ENCODE measurements at regions of chr1 and their contacts with region 1.

Region 1: GRCh38 chr1:176897350-176898236 is 266.9 kb downstream of the ASTN1 start:
- DNase-seq: no peak
- ATAC-seq: peak; percentile 92
- H3K4me3 ChIP-seq: no peak overlapping the region
- H3K27ac ChIP-seq: no peak overlapping the region
- H3K4me1 ChIP-seq: no peaks in the 10 kb centered on the region
- H3K27me3 ChIP-seq: no peaks in the 10 kb centered on the region; a peak in 1 of 4 replicates
- CTCF ChIP-seq: peak; percentile 64 to 85 (median 68)
- EP300 ChIP-seq: no peak
- POLR2A ChIP-seq: no peak
- RAD21 ChIP-seq: peak; percentile 70

Region 2: DNA sequence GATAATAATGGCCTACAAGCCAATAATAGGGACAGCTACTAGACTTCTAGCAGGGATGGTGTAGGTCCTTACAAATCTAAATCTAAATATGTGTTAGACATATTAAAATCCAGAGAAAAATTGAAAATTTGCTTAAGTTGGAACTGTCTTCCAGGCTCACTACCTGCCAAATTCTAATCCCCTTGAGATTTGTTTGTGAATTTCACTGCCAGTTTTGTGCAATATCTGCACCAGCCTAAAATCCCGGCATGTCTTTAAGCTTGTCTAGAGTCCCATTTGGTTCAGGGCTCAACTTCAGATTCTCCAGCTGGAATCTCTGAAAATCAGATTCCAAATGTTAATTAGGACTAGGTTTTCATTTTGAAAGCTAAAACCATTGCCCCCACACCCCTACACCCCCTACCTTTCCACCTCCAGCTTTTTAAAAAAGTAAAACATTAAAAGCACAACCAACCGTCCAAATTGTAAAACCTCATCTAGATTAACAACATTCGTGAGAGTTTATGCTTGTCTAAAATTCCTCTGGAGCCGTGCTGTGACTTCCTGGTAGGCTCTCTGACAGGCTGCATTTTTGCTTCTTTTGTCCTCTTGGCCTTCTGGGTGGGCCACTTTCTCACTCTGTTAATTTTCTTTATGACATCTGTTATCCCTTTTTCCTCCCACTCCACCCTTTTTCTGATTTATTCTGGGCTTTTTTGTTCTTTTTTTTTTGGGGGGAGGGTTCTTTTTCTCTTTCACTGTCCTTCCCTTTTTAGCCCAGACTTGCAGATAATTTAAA is 85.9 kb before region 1 on chr1:
- CTCF ChIA-PET with region 1: no interaction called
- POLR2A ChIA-PET with region 1: no interaction called
- RAD21 ChIA-PET with region 1: no interaction called
- SMC1A ChIA-PET with region 1: no interaction called
- in situ Hi-C with region 1: no loop called
- intact Hi-C with region 1: no loop called
- DNase-seq: no peak
- ATAC-seq: no peak
- H3K4me3 ChIP-seq: no peak overlapping the region
- H3K27ac ChIP-seq: no peak overlapping the region
- H3K4me1 ChIP-seq: no peaks in the 10 kb centered on the region
- H3K27me3 ChIP-seq: no peaks in the 10 kb centered on the region
- CTCF ChIP-seq: no peak
- EP300 ChIP-seq: no peak
- POLR2A ChIP-seq: no peak
- RAD21 ChIP-seq: no peak

Region 3: DNA sequence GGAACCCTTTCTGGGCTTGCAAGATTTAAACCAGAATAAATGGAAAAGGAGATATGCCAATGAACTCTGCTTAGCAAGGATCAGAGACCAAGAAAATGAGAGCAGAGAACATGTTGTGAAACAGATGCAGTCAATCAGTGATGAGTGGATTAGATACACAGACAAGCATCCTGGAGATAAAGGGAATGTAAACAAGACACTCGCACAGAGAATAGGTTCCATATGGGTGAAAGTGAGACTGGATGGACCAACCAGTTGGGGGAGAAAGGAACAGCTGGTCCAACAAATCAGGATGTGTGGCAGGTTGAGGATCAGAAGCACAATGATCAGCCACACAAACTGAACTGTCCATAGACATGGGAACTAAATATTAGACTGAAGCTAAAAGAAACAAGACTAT is 71.3 kb before region 1 on chr1:
- CTCF ChIA-PET with region 1: no interaction called
- POLR2A ChIA-PET with region 1: no interaction called
- RAD21 ChIA-PET with region 1: no interaction called
- SMC1A ChIA-PET with region 1: no interaction called
- in situ Hi-C with region 1: no loop called
- intact Hi-C with region 1: no loop called
- DNase-seq: no peak
- ATAC-seq: no peak
- H3K4me3 ChIP-seq: no peak overlapping the region
- H3K27ac ChIP-seq: no peak overlapping the region
- H3K4me1 ChIP-seq: no peaks in the 10 kb centered on the region
- H3K27me3 ChIP-seq: no peaks in the 10 kb centered on the region
- CTCF ChIP-seq: no peak
- EP300 ChIP-seq: no peak
- POLR2A ChIP-seq: no peak
- RAD21 ChIP-seq: no peak

Region 4: DNA sequence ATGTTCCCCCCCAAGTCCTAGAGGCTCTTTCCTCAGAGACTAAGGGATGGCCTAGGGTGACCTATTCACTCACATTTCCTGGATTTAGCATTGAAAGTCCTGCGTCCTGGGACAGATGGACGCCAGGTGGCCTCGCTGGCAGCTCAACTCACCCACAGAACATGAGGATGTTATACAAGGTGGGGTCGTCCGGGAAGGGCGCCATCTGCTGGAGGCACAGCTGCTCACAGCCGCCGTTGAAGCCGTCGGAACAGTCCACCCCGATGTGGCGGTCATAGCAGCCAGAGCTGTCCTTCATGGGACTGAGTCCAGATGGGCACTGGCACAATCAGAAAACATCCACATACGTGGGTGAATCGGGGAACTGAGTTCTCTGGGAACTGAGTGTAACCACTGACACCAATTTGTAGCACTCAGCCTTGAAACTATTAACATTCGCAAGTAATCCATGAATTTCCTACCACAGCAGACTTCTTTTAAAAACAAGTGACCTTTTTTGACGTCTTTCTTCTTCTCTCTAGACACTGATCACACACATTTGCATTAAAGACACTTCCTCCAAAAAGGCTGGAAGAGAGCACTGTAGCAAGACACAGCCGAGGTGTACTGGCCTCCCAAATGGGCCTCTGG is 51.6 kb after region 1 on chr1:
- CTCF ChIA-PET with region 1: interaction called, 45 read pairs
- POLR2A ChIA-PET with region 1: no interaction called
- RAD21 ChIA-PET with region 1: interaction called, 13 read pairs
- SMC1A ChIA-PET with region 1: interaction called, 16 read pairs
- in situ Hi-C with region 1: no loop called
- intact Hi-C with region 1: loop called (anchors 1 kb)
- DNase-seq: no peak
- ATAC-seq: peak; percentile 99
- H3K4me3 ChIP-seq: no peak overlapping the region
- H3K27ac ChIP-seq: no peak overlapping the region
- H3K4me1 ChIP-seq: no peaks in the 10 kb centered on the region
- H3K27me3 ChIP-seq: no peaks in the 10 kb centered on the region
- CTCF ChIP-seq: peak; percentile 60 to 74 (median 73)
- EP300 ChIP-seq: no peak
- POLR2A ChIP-seq: no peak
- RAD21 ChIP-seq: 0 out of 2 replicates have a peak, but pooled peaks have one; percentile 31

Region 5: DNA sequence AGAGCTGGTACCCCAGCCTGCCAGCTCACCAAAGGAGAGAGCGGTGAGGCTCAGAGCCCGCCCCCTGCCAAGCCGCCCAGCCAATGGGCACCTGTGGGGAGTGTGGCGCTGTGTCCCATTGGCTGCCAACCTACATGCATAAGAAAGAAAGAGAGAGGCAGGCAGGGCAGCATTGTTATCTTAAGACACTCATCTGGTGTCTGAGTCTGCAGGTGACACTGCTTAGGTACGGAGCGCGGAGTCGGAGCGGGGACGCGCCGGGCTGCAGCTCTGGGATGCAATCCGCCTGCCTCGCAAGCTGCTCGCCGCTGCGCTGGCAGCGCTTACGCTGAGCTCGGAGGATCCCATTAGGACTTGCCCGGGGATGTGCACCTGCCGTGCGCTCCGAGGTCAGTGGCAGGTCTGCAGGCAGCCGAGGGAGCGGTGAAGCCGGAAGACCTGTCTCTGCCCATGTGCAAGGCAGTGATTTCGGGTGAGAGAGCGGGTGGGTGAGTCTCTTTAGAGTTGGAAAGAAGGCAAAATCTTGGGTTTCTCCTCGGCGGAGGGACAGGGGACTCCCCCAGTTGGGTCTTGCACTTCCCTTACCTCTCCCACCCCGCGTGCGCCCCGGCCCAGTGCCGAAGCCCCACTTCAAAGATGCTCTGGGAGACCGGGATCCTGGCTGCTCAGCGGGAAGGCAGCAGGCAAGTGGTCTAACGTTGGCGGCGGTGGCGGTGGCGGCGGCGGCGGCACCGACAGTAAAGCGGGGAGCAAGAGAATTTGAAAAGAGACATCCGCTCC is 273.4 kb after region 1 on chr1 and contains the start of gene BRINP2:
- CTCF ChIA-PET with region 1: no interaction called
- POLR2A ChIA-PET with region 1: no interaction called
- RAD21 ChIA-PET with region 1: no interaction called
- SMC1A ChIA-PET with region 1: no interaction called
- in situ Hi-C with region 1: loop called (anchors 10 kb)
- intact Hi-C with region 1: no loop called
- DNase-seq: no peak
- ATAC-seq: peak; percentile 75
- H3K4me3 ChIP-seq: no peak within 1 kb of the TSS
- H3K27ac ChIP-seq: no peak within 1 kb of the TSS
- H3K4me1 ChIP-seq: no peaks in the 10 kb centered on the region
- H3K27me3 ChIP-seq: peaks cover 0 to 10% of the 10 kb centered on the region in 2 experiments; a peak in 2 of 4 replicates
- CTCF ChIP-seq: no peak
- EP300 ChIP-seq: no peak
- POLR2A ChIP-seq: no peak
- RAD21 ChIP-seq: no peak
- polyA plus RNA-seq, gene BRINP2: not detected

Region 6: DNA sequence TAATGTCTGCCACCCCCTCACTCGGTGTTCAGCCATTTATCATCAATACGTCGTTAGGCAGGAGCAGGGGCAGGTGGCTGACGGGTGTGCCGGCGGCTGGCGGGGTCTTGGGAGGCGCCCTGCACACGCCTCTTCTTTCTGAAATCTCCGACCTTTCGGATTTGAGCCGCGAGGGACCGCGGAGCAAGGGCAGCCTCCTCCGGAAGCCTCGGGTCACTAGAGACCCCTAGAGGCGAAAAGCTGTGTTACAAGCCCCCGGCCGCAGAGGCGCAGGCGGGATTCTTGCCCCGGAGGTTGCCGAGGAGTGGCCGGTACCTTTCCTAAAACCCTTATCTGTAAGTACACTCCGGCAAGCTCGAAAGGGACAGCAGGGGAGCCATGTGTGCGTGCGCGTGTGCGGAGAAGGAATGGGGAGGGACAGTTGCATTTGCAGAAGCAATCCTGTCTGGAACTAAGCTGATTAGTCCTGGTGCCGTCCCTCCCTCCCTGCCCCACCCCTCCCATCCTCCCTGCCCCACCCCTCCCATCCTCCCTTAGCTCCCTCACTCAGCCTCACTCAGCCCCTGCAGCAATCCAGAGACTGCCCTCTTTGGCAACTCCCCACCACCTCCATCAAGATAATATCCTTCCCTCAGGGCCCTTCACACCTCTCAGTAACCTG is 284.2 kb after region 1 on chr1:
- CTCF ChIA-PET with region 1: interaction called, 11 read pairs
- POLR2A ChIA-PET with region 1: no interaction called
- RAD21 ChIA-PET with region 1: no interaction called
- SMC1A ChIA-PET with region 1: interaction called, 3 read pairs
- in situ Hi-C with region 1: loop called (anchors 10 kb)
- intact Hi-C with region 1: loop called (anchors 1 kb)
- DNase-seq: no peak
- ATAC-seq: peak; percentile 98
- H3K4me3 ChIP-seq: no peak overlapping the region
- H3K27ac ChIP-seq: no peak overlapping the region
- H3K4me1 ChIP-seq: no peaks in the 10 kb centered on the region
- H3K27me3 ChIP-seq: peaks cover 0 to 7% of the 10 kb centered on the region in 2 experiments; a peak in 3 of 4 replicates
- CTCF ChIP-seq: peak; percentile 71 to 84 (median 77)
- EP300 ChIP-seq: no peak
- POLR2A ChIP-seq: no peak
- RAD21 ChIP-seq: peak; percentile 63

Region 7: DNA sequence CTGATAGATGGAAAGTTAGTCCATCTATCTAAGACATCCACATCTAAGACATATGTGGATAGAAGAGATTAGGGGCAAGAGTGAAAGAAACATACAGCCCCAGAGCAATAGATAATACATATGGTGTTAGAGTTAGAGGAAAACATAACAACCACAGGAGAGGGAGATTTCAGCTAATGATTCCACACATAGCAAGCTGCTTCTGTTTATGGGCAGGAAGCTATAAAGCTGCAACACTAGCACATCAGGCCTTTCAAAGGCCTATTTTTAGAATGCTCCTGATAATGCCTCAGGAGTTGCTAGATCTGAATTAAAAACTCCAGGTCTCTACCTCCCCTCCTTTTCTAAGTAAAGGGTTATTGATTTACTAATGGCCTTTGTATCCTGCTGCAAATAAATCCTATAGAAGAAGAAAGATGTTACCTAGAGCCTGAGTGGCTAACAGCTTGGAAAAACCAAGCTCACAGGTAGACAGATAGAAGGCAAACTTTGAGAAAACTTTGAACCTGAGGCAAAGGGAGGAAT is 309.3 kb after region 1 on chr1:
- CTCF ChIA-PET with region 1: no interaction called
- POLR2A ChIA-PET with region 1: no interaction called
- RAD21 ChIA-PET with region 1: no interaction called
- SMC1A ChIA-PET with region 1: no interaction called
- in situ Hi-C with region 1: no loop called
- intact Hi-C with region 1: no loop called
- DNase-seq: no peak
- ATAC-seq: no peak
- H3K4me3 ChIP-seq: no peak overlapping the region
- H3K27ac ChIP-seq: no peak overlapping the region
- H3K4me1 ChIP-seq: no peaks in the 10 kb centered on the region
- H3K27me3 ChIP-seq: no peaks in the 10 kb centered on the region
- CTCF ChIP-seq: no peak
- EP300 ChIP-seq: no peak
- POLR2A ChIP-seq: no peak
- RAD21 ChIP-seq: no peak

Region 8: GRCh38 chr1:177340601-177341067 is 443.0 kb after region 1 on chr1:
- CTCF ChIA-PET with region 1: no interaction called
- POLR2A ChIA-PET with region 1: no interaction called
- RAD21 ChIA-PET with region 1: no interaction called
- SMC1A ChIA-PET with region 1: no interaction called
- in situ Hi-C with region 1: loop called (anchors 10 kb)
- intact Hi-C with region 1: no loop called
- DNase-seq: no peak
- ATAC-seq: no peak
- H3K4me3 ChIP-seq: no peak overlapping the region
- H3K27ac ChIP-seq: no peak overlapping the region
- H3K4me1 ChIP-seq: no peaks in the 10 kb centered on the region
- H3K27me3 ChIP-seq: no peaks in the 10 kb centered on the region; a peak in 1 of 4 replicates
- CTCF ChIP-seq: no peak
- EP300 ChIP-seq: no peak
- POLR2A ChIP-seq: no peak
- RAD21 ChIP-seq: no peak

Region 9: DNA sequence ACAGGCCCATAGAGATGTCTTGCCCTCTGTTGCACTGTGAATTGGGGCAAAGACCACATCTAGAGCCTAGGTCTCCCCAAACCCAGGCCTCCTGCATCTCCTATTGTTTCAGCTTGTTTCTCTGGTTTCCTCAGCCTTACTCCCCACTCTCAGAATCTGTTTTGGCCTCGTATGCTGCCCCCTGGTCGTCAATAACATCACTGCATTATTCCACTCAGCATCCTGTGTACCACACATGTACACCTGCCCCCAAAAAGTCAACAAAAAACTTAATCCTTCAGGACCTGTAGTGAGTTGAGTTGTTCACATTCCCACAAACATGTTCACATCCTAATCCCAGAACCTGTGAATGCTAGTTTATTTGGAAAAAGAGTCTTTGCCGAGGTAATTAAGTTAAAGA is 458.0 kb after region 1 on chr1:
- CTCF ChIA-PET with region 1: interaction called, 3 read pairs
- POLR2A ChIA-PET with region 1: no interaction called
- RAD21 ChIA-PET with region 1: interaction called, 4 read pairs
- SMC1A ChIA-PET with region 1: no interaction called
- in situ Hi-C with region 1: no loop called
- intact Hi-C with region 1: loop called (anchors 5 kb)
- DNase-seq: no peak
- ATAC-seq: peak; percentile 80
- H3K4me3 ChIP-seq: no peak overlapping the region
- H3K27ac ChIP-seq: no peak overlapping the region
- H3K4me1 ChIP-seq: no peaks in the 10 kb centered on the region
- H3K27me3 ChIP-seq: no peaks in the 10 kb centered on the region
- CTCF ChIP-seq: peak; percentile 28 to 37 (median 32); a peak in 4 of 6 replicates
- EP300 ChIP-seq: no peak
- POLR2A ChIP-seq: no peak
- RAD21 ChIP-seq: peak; percentile 38; the same call in 1 of the 2 replicates